KBM-7 (cell line): ENCODE measurements at regions of chr6 and their contacts with region 1.

Region 1: DNA sequence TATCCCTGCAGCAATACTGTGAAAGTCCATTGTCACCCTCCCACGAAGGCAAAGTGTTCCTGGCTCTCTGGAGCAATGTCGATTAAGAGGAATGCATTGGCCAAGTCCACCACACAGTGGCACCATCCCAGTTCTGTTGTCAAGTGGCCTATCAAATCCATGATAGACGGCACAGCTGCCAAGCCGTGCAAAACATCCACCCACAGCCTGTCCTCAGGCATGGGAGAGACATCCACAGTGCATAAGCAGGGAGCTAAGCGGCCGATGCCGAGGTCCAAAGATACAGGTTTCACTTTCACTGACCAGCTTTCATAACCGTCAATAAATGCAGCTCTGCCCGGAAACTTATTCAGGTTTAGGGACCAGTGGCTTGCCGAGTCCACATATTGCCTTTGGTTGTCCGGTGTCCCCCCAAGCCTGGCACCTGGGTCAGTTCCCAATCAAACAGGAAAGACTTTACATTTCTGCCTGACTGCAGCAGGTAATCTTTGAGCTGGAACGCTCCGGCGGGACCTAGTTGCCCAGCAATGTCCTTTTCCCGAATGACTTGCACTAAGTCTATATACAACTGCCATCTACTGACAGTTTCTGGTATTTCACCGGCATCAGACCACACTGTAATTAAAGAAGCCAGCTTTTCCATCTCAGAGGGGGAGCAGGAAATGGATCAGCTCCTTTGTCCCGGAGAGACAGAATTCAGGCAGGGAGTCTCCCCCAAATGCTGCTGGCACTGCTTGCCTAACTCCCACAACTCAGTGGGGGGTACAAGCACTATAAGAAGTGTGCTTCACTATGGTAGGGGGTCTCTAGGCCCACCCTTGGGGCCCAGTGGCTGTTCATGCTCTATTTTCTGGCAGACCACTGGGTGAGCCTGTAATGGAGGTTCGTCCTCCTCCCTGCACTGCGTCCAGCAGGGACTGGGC is 6.3 kb downstream of the ZKSCAN3 start:
- DNase-seq: peak; percentile 87

Region 2: GRCh38 chr6:27902335-27903314 is 453.4 kb before region 1 on chr6:
- in situ Hi-C with region 1: loop called (anchors 25 kb)
- DNase-seq: peak; percentile 92

Region 3: GRCh38 chr6:28136585-28137504 is 219.2 kb before region 1 on chr6:
- in situ Hi-C with region 1: loop called (anchors 25 kb)
- DNase-seq: peak; percentile 89

Region 4: GRCh38 chr6:28252009-28252975 is 103.7 kb before region 1 on chr6 and contains the start of gene ZKSCAN4:
- in situ Hi-C with region 1: no loop called
- DNase-seq: peak; percentile 94